ENCODE measurements at regions of chr3 and their contacts with region 1.

Region 1: DNA sequence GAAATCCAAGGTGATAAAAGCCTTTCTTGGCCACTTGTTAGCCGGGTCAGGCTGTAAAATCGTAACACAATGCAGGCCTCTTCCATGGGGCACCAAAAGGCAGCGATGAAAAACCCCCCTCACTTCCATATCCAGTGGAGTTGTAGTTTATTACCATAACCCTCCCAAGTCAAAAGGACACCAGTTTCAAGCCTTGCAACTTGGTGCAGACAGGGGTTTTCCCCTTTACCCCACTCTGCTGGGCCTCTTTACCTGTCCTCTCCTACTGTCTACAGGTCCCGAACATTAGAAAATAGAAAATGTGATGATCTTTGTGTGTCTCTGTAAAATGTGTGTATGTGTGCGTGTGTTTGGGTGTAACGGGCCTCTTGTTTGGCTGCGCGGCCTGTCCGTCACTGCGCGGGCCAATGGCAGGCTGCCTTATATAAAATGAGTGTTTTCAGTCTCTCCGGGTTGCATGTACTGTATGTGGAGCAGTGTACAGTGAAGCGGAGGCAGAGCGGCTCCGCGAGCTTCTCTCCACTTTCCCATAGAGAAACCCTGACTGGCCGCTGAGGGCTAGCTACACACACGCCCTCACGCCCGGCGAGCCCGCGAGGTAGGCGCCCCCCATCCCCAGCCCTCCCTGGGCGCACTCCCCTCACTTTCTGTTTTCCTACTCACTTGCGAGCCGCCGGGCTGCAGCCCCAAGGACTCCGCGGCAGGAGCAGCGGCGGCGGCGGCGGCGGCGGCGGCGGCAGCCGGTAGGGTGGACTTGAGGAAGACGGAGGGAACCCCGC is at the start of gene BBX:
- DNase-seq: peak; percentile 94 to 98
- H3K4me3 ChIP-seq: peak within 1 kb of the TSS; percentile 95
- H3K27ac ChIP-seq: peak within 1 kb of the TSS; percentile 58
- H3K4me1 ChIP-seq: peaks cover 23% of the 10 kb centered on the region
- H3K27me3 ChIP-seq: no peaks in the 10 kb centered on the region
- CTCF ChIP-seq: no peak
- total RNA-seq, gene BBX: 91.7 and 92.5 TPM in 2 replicates

Region 2: GRCh38 chr3:107384907-107385306 is 137.8 kb before region 1 on chr3:
- CTCF ChIA-PET with region 1: no interaction called
- POLR2A ChIA-PET with region 1: no interaction called
- intact Hi-C with region 1: no loop called
- DNase-seq: no peak
- H3K4me3 ChIP-seq: no peak overlapping the region
- H3K27ac ChIP-seq: no peak overlapping the region
- H3K4me1 ChIP-seq: no peaks in the 10 kb centered on the region
- H3K27me3 ChIP-seq: no peaks in the 10 kb centered on the region
- CTCF ChIP-seq: no peak

Region 3: GRCh38 chr3:107450254-107450893 is 72.3 kb before region 1 on chr3:
- CTCF ChIA-PET with region 1: no interaction called
- POLR2A ChIA-PET with region 1: no interaction called
- intact Hi-C with region 1: no loop called
- DNase-seq: no peak
- H3K4me3 ChIP-seq: no peak overlapping the region
- H3K27ac ChIP-seq: no peak overlapping the region
- H3K4me1 ChIP-seq: no peaks in the 10 kb centered on the region
- H3K27me3 ChIP-seq: no peaks in the 10 kb centered on the region
- CTCF ChIP-seq: no peak

Region 4: GRCh38 chr3:107498646-107499045 is 24.1 kb before region 1 on chr3:
- CTCF ChIA-PET with region 1: no interaction called
- POLR2A ChIA-PET with region 1: interaction called, 16 read pairs
- intact Hi-C with region 1: no loop called
- DNase-seq: no peak
- H3K4me3 ChIP-seq: no peak overlapping the region
- H3K27ac ChIP-seq: no peak overlapping the region
- H3K4me1 ChIP-seq: no peaks in the 10 kb centered on the region
- H3K27me3 ChIP-seq: no peaks in the 10 kb centered on the region
- CTCF ChIP-seq: no peak

Region 5: GRCh38 chr3:108677811-108678210 is 1155.1 kb after region 1 on chr3:
- CTCF ChIA-PET with region 1: no interaction called
- POLR2A ChIA-PET with region 1: interaction called, 12 read pairs
- intact Hi-C with region 1: no loop called
- DNase-seq: no peak
- H3K4me3 ChIP-seq: no peak overlapping the region
- H3K27ac ChIP-seq: no peak overlapping the region
- H3K4me1 ChIP-seq: no peaks in the 10 kb centered on the region
- H3K27me3 ChIP-seq: no peaks in the 10 kb centered on the region
- CTCF ChIP-seq: no peak

Measured in PC-9 (cell line).